Left ventricle myocardium superior (tissue), 1 donor: ENCODE measurements at regions of chr3 and their contacts with region 1.

Region 1: GRCh38 chr3:48464713-48465221 is 18.2 kb downstream of the ATRIP start:
- DNase-seq: no peak
- ATAC-seq: no peak

Region 2: GRCh38 chr3:48548729-48549705 is 84.2 kb after region 1 on chr3:
- intact Hi-C with region 1: loop called (anchors 5 kb)
- DNase-seq: peak; percentile 92
- ATAC-seq: peak; percentile 95